Naive thymus-derived CD4-positive, alpha-beta T cell (primary cell): ENCODE measurements at regions of chr18 and their contacts with region 1.

Region 1: DNA sequence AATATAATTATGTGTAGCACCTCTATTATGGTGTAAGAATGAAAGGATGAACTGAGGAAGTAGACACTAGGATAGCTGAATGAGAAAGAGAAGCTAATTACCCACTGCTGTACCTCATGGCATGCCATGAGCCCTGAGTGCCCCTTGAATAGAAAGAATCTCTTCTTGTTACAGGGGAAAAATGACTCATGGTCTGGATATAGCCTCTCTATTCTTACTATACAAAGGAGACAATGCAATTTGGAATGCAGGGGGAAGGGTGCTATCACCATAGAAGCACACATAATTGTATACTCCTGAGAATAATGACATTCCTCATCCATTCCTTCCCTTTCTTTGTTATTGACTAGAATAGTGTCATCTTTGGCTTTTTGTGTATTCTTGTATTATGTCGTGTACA is 385.2 kb downstream of the CDH7 start:
- DNase-seq: no peak
- ATAC-seq: no peak
- H3K4me3 ChIP-seq: no peak overlapping the region
- H3K4me3 Mint-ChIP-seq: no peak overlapping the region
- H3K27ac ChIP-seq: no peak overlapping the region
- H3K27ac Mint-ChIP-seq: no peak overlapping the region
- H3K4me1 ChIP-seq: no peaks in the 10 kb centered on the region
- H3K4me1 Mint-ChIP-seq: no peaks in the 10 kb centered on the region
- H3K27me3 ChIP-seq: no peaks in the 10 kb centered on the region
- H3K27me3 Mint-ChIP-seq: no peaks in the 10 kb centered on the region

Region 2: DNA sequence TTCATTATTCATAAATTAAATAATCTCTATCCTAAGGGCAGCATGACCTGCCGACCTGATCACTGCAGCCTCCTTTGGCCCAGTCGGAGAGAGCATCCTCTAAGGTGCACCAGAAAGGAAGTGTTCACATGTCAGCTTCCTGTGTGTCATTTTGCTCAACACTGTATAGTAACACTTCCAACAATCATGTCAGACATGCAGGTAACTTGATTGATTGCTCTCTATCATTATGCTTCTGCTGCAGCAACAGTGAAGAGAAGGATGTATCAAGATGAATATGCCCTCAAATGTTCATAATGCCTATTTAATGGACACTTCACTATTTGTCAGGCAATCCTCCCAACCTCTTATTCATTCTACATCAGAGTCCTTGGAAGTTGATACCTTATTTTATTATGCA is 53.0 kb before region 1 on chr18:
- CTCF ChIA-PET with region 1: no interaction called
- POLR2A ChIA-PET with region 1: no interaction called
- intact Hi-C with region 1: loop called in 1 of 2 experiments (anchors 5 kb)
- DNase-seq: no peak
- ATAC-seq: no peak
- H3K4me3 ChIP-seq: no peak overlapping the region
- H3K4me3 Mint-ChIP-seq: no peak overlapping the region
- H3K27ac ChIP-seq: no peak overlapping the region
- H3K27ac Mint-ChIP-seq: no peak overlapping the region
- H3K4me1 ChIP-seq: no peaks in the 10 kb centered on the region
- H3K4me1 Mint-ChIP-seq: no peaks in the 10 kb centered on the region
- H3K27me3 ChIP-seq: no peaks in the 10 kb centered on the region
- H3K27me3 Mint-ChIP-seq: no peaks in the 10 kb centered on the region